Breast epithelium (tissue), 4 donors: ENCODE measurements at regions of chr20 and their contacts with region 1.

Region 1: GRCh38 chr20:48657475-48658470 is 170.0 kb downstream of the PREX1 start:
- DNase-seq: peak; percentile 63 to 69
- H3K4me3 ChIP-seq: no peak overlapping the region
- H3K27ac ChIP-seq: peak overlapping the region in 1 of 2 donors; percentile 30
- H3K4me1 ChIP-seq: no peaks in the 10 kb centered on the region
- H3K27me3 ChIP-seq: no peaks in the 10 kb centered on the region
- CTCF ChIP-seq: peak; percentile 90 to 96 (median 96)
- POLR2A ChIP-seq: no peak

Region 2: DNA sequence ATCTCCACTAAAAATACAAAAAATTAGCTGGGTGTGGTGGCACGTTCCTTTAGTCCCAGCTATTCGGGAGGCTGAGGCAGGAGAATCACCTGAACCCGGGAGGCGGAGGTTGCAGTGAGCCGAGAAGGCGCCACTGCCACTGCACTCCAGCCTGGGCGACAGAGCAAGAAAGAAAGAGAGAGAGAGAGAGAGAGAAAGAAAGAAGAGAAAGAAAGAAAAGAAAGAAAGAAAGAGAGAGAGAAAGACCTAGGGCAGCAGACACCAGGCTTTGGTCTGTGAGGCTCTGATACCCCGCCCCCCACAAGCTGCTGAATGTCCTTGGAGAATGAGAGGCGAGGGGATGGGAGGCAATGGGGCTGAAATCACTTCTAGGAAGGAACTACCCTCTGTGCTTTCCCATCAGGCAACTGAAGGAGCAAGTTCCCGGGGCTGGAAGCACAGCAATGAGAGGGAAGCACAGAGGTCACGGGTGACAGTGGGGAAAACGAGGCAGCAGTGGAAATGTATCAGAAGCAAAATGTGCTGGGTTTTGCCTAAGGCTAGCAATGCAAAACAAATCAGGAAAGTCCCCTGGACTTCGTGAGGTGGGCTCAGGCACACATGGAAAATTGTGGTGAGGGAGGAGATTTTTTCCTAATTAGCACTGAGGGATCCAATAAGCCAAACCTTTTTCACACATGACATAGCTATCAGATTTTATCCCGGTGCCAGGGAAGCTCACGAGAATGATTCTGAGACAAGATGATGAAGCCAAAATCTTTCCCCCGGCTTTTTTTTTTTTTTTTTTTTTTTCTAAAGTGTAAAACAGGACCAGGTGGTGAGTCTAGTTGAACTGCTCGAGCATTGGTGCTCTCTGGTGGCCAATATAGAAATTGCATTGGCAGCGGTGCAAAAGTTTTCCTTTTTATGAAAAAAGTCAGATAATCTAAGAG is 246.9 kb after region 1 on chr20:
- intact Hi-C with region 1: loop called (anchors 5 kb)
- DNase-seq: no peak
- H3K4me3 ChIP-seq: peak overlapping the region in 1 of 3 donors; percentile 16
- H3K27ac ChIP-seq: no peak overlapping the region
- H3K4me1 ChIP-seq: no peaks in the 10 kb centered on the region
- H3K27me3 ChIP-seq: no peaks in the 10 kb centered on the region
- CTCF ChIP-seq: peak; percentile 87 to 94 (median 94)
- POLR2A ChIP-seq: no peak